ENCODE measurements at regions of chrX and their contacts with region 1.

Region 1: GRCh38 chrX:120697053-120697452 is 67.2 kb upstream of the C1GALT1C1 start:
- DNase-seq: peak; percentile 88
- H3K4me3 Mint-ChIP-seq: peak overlapping the region; percentile 70
- H3K27ac Mint-ChIP-seq: peak overlapping the region; percentile 96
- H3K4me1 Mint-ChIP-seq: peaks cover 17% of the 10 kb centered on the region
- H3K27me3 Mint-ChIP-seq: no peaks in the 10 kb centered on the region

Region 2: DNA sequence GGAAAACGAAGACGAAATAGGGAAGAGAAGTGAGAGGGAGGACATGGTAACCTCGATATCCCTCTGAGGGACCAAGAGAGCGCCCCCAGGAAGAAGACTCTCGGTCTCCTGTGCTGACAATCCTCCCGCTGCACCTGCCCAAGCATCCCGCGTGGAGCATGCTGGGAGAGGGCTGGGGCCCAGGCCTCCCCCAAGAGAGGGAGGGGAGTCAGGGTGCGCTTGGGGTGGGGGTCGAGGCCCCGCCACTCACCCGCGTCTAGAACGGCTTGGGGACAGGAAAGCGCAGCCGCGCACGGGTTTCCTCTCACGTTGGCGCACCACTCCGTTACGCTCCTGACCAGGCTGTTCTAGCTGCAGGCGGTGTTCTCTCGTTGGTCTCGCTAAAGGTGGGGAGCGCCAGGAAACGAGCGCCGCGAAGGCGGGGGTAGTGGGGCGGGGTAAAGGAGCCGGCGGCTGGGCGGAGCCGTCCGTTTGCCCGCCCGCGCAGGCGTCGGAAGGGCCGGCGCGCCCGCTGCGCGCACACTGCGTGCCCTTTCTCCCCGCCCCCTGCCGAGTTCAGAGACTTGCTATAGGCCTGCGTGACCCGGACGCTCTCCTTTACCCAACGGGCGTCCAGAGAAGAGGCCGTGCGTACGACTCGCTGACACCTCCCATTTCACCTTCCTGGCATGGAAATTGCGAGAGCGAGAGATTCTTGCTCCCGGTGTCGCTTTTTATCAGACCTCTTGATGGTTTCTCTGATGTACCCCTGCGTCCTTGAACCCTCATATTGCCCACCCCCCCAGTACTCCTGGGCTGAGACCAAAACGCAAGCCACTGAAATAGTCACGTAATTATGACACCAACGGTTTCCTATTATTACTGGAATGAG is 67.2 kb before region 1 on chrX and contains the start of gene C1GALT1C1:
- intact Hi-C with region 1: loop called (anchors 1 kb)
- DNase-seq: peak; percentile 97
- H3K4me3 Mint-ChIP-seq: peak within 1 kb of the TSS; percentile 94
- H3K27ac Mint-ChIP-seq: peak within 1 kb of the TSS; percentile 97
- H3K4me1 Mint-ChIP-seq: peaks cover 15% of the 10 kb centered on the region
- H3K27me3 Mint-ChIP-seq: no peaks in the 10 kb centered on the region
- total RNA-seq, gene C1GALT1C1: 21.1 and 21.7 TPM in 2 replicates

Region 3: GRCh38 chrX:120664081-120664480 is 33.0 kb before region 1 on chrX:
- intact Hi-C with region 1: no loop called
- DNase-seq: no peak
- H3K4me3 Mint-ChIP-seq: no peak overlapping the region
- H3K27ac Mint-ChIP-seq: no peak overlapping the region
- H3K4me1 Mint-ChIP-seq: peaks cover 6% of the 10 kb centered on the region
- H3K27me3 Mint-ChIP-seq: no peaks in the 10 kb centered on the region

Region 4: GRCh38 chrX:120677004-120677652 is 19.9 kb before region 1 on chrX:
- intact Hi-C with region 1: loop called (anchors 2 kb)
- DNase-seq: no peak
- H3K4me3 Mint-ChIP-seq: no peak overlapping the region
- H3K27ac Mint-ChIP-seq: peak overlapping the region; percentile 75
- H3K4me1 Mint-ChIP-seq: peaks cover 14% of the 10 kb centered on the region
- H3K27me3 Mint-ChIP-seq: no peaks in the 10 kb centered on the region

Region 5: GRCh38 chrX:120736989-120737388 is 39.9 kb after region 1 on chrX:
- intact Hi-C with region 1: loop called (anchors 2 kb)
- DNase-seq: no peak
- H3K4me3 Mint-ChIP-seq: no peak overlapping the region
- H3K27ac Mint-ChIP-seq: peak overlapping the region; percentile 50
- H3K4me1 Mint-ChIP-seq: peaks cover 20% of the 10 kb centered on the region
- H3K27me3 Mint-ChIP-seq: no peaks in the 10 kb centered on the region

Region 6: GRCh38 chrX:120753413-120754251 is 56.6 kb after region 1 on chrX:
- intact Hi-C with region 1: loop called (anchors 5 kb)
- DNase-seq: no peak
- H3K4me3 Mint-ChIP-seq: peak overlapping the region; percentile 47
- H3K27ac Mint-ChIP-seq: peak overlapping the region; percentile 71
- H3K4me1 Mint-ChIP-seq: peaks cover 33% of the 10 kb centered on the region
- H3K27me3 Mint-ChIP-seq: no peaks in the 10 kb centered on the region

Region 7: GRCh38 chrX:120790118-120790517 is 93.1 kb after region 1 on chrX:
- intact Hi-C with region 1: no loop called
- DNase-seq: peak; percentile 77
- H3K4me3 Mint-ChIP-seq: peak overlapping the region; percentile 67
- H3K27ac Mint-ChIP-seq: peak overlapping the region; percentile 87
- H3K4me1 Mint-ChIP-seq: peaks cover 15% of the 10 kb centered on the region
- H3K27me3 Mint-ChIP-seq: no peaks in the 10 kb centered on the region

Region 8: DNA sequence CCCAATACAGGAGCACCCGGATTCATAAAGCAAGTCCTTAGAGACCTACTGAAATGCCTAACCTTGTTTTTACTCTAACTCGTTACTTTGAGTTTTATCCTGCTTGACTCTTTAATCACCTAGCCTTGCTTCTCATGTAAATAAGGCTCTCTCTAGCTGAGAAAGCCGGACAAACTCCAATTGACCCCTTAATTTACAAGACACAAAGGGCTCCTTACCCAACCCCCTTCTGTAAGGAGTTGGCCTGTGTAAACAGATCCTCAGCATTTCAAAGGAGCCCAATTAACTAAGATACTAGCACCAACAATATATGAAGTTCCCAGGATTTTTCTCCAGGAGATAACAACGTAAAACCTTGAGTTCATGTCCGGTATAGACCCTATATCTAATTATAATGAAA is 116.9 kb after region 1 on chrX:
- intact Hi-C with region 1: no loop called
- DNase-seq: no peak
- H3K4me3 Mint-ChIP-seq: no peak overlapping the region
- H3K27ac Mint-ChIP-seq: no peak overlapping the region
- H3K4me1 Mint-ChIP-seq: no peaks in the 10 kb centered on the region
- H3K27me3 Mint-ChIP-seq: no peaks in the 10 kb centered on the region